ENCODE measurements at regions of chrX and their contacts with region 1.

Region 1: DNA sequence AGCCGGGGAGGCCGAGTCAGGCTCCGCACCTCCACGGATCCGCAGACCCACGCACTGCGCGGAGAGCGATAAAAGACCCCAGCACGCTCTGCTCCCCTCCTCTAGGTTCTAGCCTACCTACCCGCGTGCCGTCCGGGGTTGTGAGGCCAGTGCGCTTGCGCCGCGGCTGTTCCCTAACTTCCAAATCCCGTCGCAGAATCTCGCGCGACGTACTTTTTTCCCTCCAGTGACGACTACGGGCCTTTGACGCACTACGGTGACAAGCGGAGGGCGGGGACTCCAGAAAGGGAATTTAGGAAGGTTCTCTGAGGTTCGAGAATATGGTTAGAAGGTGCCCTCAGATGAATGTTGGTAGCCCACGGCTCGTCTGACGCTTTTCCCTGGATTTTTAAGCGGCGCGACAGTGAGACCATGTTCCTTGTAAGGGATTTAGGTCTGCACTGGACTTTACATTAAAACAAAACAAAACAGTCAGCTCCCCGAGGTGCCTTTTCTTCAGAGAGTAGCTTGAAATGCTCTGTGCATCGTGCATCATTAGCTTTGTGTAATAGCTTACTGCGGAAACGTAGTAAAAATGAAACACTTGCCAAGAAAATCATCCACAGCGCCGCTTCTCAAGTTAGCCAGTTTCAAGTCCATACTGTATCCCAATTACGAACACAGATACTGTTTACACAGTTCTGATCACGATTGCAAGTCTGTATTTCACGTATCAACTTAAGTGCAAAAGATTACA is at the start of gene NKRF:
- DNase-seq: peak; percentile 94
- H3K4me3 Mint-ChIP-seq: peak within 1 kb of the TSS; percentile 92
- H3K27ac Mint-ChIP-seq: peak within 1 kb of the TSS; percentile 93
- H3K4me1 Mint-ChIP-seq: peaks cover 35% of the 10 kb centered on the region
- H3K27me3 Mint-ChIP-seq: no peaks in the 10 kb centered on the region
- total RNA-seq, gene NKRF: 19.5 to 20.2 TPM

Region 2: DNA sequence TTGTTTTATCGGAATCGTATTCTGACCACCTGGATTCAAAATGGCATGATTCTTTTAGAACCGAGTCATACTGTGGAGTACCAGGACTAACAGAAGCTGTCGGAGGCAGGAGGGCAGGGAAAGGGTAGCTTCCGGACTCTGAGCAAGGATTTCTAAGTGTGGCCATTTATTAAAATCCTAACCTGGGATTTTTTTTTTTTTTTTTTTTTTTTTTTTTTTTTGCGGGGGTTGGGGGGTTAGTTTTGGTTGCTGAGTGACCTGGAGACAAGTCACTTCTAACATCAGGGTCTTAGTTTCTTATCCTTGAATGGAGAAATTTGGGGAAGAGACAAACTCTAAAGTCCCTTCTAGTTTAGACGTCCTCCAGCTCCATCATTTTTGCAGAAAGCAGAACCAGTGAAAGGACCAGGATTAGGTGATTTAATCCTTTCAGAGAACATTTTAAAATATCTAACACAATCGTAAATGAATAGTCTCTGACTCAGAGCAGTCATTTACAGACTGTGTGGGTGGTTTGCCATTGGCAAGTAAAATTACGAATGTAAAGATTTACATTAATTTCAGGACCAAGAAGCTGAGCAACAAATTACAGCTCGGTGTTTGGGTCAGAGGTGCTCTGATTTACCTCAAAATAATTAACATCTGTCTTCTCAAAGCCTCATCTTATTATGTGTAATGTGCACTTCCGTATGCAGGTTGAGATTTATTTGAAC is 130.9 kb before region 1 on chrX:
- CTCF ChIA-PET with region 1: no interaction called
- POLR2A ChIA-PET with region 1: no interaction called
- intact Hi-C with region 1: no loop called
- DNase-seq: no peak
- H3K4me3 Mint-ChIP-seq: no peak overlapping the region
- H3K27ac Mint-ChIP-seq: no peak overlapping the region
- H3K4me1 Mint-ChIP-seq: peaks cover 17% of the 10 kb centered on the region
- H3K27me3 Mint-ChIP-seq: no peaks in the 10 kb centered on the region

Region 3: GRCh38 chrX:119565107-119565663 is 41.3 kb before region 1 on chrX and contains the start of gene STEEP1:
- CTCF ChIA-PET with region 1: interaction called, 3 read pairs
- POLR2A ChIA-PET with region 1: no interaction called
- intact Hi-C with region 1: loop called (anchors 1 kb)
- DNase-seq: peak; percentile 92
- H3K4me3 Mint-ChIP-seq: peak within 1 kb of the TSS; percentile 94
- H3K27ac Mint-ChIP-seq: peak within 1 kb of the TSS; percentile 84
- H3K4me1 Mint-ChIP-seq: peaks cover 13% of the 10 kb centered on the region
- H3K27me3 Mint-ChIP-seq: no peaks in the 10 kb centered on the region
- total RNA-seq, gene STEEP1: 20.4 to 21.0 TPM

Region 4: GRCh38 chrX:119647552-119648420 is 41.3 kb after region 1 on chrX:
- CTCF ChIA-PET with region 1: interaction called, 3 read pairs
- POLR2A ChIA-PET with region 1: interaction called, 6 read pairs
- intact Hi-C with region 1: loop called (anchors 1 kb)
- DNase-seq: peak; percentile 84
- H3K4me3 Mint-ChIP-seq: peak overlapping the region; percentile 51
- H3K27ac Mint-ChIP-seq: peak overlapping the region; percentile 97
- H3K4me1 Mint-ChIP-seq: peaks cover 33% of the 10 kb centered on the region
- H3K27me3 Mint-ChIP-seq: no peaks in the 10 kb centered on the region

Region 5: GRCh38 chrX:119729408-119730201 is 123.2 kb after region 1 on chrX:
- CTCF ChIA-PET with region 1: interaction called, 14 read pairs
- POLR2A ChIA-PET with region 1: no interaction called
- intact Hi-C with region 1: loop called (anchors 1 kb)
- DNase-seq: peak; percentile 68
- H3K4me3 Mint-ChIP-seq: no peak overlapping the region
- H3K27ac Mint-ChIP-seq: no peak overlapping the region
- H3K4me1 Mint-ChIP-seq: peaks cover 5% of the 10 kb centered on the region
- H3K27me3 Mint-ChIP-seq: no peaks in the 10 kb centered on the region

Region 6: GRCh38 chrX:119871599-119872395 is 265.3 kb after region 1 on chrX and contains the starts of genes NDUFA1 and RNF113A:
- CTCF ChIA-PET with region 1: no interaction called
- POLR2A ChIA-PET with region 1: no interaction called
- intact Hi-C with region 1: loop called (anchors 5 kb)
- DNase-seq: peak; percentile 91
- H3K4me3 Mint-ChIP-seq: peak within 1 kb of the TSS; percentile 98
- H3K27ac Mint-ChIP-seq: peak within 1 kb of the TSS; percentile 98
- H3K4me1 Mint-ChIP-seq: peaks cover 10% of the 10 kb centered on the region
- H3K27me3 Mint-ChIP-seq: no peaks in the 10 kb centered on the region
- total RNA-seq, gene NDUFA1: 103 to 104 TPM
- total RNA-seq, gene RNF113A: 23.1 to 26.2 TPM

Measured in activated CD4-positive, alpha-beta memory T cell treated with anti-CD3 and anti-CD28 coated beads for 36 hours (primary cell).